Naive thymus-derived CD4-positive, alpha-beta T cell (primary cell): ENCODE measurements at regions of chr3 and their contacts with region 1.

Region 1: DNA sequence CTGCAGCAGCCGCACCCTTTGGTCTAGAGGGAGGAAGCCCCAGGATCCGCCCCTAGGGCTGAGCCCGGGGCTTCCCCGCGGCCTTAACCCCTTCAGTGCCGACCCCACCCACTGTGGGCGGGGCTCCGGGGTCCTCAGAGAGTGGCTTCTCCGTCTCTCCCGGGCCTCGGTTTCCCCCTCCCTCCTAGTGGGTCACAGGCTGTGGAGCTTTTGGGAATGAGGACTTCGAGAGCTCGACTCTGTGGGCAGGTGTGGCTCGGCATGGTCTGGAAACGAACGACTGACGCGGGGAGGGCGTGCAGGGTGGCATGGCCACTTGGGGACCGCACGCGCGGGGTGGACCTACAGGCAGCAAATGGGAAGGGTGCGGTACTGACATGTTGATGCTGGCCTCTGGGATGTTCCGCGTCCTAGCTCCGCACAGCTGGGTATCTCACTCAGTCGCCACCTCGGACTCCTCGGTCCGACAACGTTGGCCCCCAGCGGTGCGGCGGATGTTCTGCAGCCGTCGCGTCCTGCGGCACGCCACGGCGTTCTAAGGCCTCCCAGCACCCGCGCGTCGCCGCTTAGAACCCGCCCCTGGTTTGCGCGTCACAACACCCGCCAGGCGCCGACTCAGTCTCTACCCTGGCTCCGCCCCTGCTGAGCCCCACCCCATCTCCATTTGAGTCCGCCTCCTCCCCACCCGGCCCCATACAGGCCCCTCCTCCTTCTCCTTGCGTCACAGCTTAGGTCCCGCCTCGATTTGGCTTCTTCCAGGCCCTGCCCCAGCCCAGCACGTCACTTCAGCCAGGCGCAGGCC is at the starts of genes HYAL3 and NAA80:
- DNase-seq: peak; percentile 94 to 100 (median 99)
- ATAC-seq: peak; percentile 93
- H3K4me3 ChIP-seq: peak within 1 kb of the TSS; percentile 97
- H3K4me3 Mint-ChIP-seq: peak within 1 kb of the TSS; percentile 84 to 99 (median 97)
- H3K27ac ChIP-seq: peak within 1 kb of the TSS; percentile 86
- H3K27ac Mint-ChIP-seq: peak within 1 kb of the TSS; percentile 90 to 100 (median 99)
- H3K4me1 ChIP-seq: peaks cover 19 to 20% of the 10 kb centered on the region in 2 donors
- H3K4me1 Mint-ChIP-seq: peaks cover 12 to 36% (median 22%) of the 10 kb centered on the region in 7 donors
- H3K27me3 ChIP-seq: no peaks in the 10 kb centered on the region
- H3K27me3 Mint-ChIP-seq: no peaks in the 10 kb centered on the region
- total RNA-seq, gene HYAL3: 3.4 to 10.7 (median 4.2) TPM
- total RNA-seq, gene NAA80: 30.2 to 44.9 (median 33.6) TPM

Region 2: DNA sequence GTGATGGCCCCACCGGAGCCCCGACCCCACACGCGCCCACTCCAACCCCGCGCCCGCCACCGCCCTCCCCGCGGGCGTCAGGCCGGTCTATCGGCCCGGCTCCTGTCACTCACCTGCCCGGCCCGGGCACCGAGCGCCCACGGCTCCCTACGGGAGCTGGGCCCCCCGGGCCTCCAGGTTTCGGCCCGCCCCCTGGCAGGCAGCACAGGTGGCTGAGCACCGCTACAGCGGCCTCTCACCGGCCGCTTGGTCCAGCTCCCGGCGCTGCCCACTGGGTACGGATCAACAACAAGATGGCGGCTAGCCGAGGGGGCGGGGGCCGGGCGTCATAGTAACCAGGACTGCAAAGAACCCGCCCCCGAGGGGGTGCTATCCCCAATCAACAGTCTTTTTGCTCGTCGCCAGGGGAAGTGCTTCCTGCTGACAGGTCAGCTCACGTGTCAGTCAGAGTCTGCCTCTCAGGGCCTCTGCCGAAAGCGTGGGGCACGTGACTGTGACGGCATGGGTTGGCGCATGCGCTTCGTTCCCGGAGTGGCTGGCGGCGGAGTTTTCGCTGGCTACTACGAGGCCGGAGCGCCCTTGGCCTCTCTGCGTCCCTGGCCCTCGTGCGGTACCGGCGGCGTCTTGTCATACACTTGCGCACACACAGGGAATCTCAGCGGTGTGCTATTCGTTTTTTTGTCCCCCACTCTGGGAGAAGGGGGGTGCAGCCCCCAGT is 512.6 kb before region 1 on chr3 and contains the start of gene IP6K1:
- CTCF ChIA-PET with region 1: no interaction called
- POLR2A ChIA-PET with region 1: interaction called, 3 read pairs
- intact Hi-C with region 1: loop called in 1 of 2 experiments (anchors 1 kb)
- DNase-seq: peak; percentile 90 to 100 (median 99)
- ATAC-seq: peak; percentile 99
- H3K4me3 ChIP-seq: peak within 1 kb of the TSS; percentile 80
- H3K4me3 Mint-ChIP-seq: peak within 1 kb of the TSS; percentile 91 to 99 (median 94)
- H3K27ac ChIP-seq: peak within 1 kb of the TSS; percentile 95
- H3K27ac Mint-ChIP-seq: peak within 1 kb of the TSS; percentile 96 to 100 (median 99)
- H3K4me1 ChIP-seq: peaks cover 9 to 12% of the 10 kb centered on the region in 2 donors
- H3K4me1 Mint-ChIP-seq: peaks cover 15 to 50% (median 32%) of the 10 kb centered on the region in 7 donors
- H3K27me3 ChIP-seq: no peaks in the 10 kb centered on the region
- H3K27me3 Mint-ChIP-seq: peaks cover 0 to 6% (median 0%) of the 10 kb centered on the region in 5 donors
- total RNA-seq, gene IP6K1: 41.8 to 57.0 (median 47.3) TPM

Region 3: DNA sequence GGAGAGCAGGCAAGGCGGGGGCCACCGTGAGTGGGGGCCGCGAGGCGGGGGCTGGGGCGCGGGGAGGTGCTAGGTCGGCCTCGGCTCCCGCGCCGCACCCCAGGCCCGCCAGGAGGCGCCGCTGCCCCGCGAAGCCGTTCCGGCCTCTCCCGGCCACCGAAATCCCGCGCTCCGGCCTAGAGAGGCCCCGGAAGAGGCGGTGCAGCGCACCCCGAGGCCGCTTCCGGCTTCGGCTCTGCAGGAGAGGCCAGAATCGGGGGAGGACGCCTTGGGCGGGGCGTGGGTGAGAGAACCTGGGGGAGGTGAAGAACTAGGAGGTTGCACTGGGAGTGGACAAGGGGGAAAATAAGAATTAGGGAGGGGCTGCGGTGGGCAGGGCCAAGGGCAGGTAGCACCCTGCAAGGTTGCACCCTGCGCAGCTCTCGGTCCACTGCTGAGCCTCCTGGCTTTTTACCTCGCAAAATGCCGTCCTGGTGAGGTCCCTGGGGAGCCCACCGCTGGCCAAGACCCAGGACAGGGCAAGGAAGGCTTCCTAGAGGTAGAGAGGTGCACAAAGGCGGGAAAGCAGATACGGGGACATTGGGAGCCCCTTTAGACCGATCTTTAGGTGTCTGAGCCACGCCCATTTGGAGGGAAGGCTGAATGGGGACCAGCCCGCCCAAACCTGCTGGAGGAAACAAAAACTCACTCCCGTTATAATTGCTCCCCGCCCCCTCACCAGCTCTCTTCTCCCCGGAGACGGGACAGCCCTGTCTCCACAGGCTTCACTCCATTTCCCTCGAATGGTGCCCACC is 71.5 kb before region 1 on chr3:
- CTCF ChIA-PET with region 1: interaction called, 3 read pairs
- POLR2A ChIA-PET with region 1: interaction called, 5 read pairs
- intact Hi-C with region 1: loop called in 1 of 2 experiments (anchors 2 kb)
- DNase-seq: peak; percentile 86 to 96 (median 91)
- ATAC-seq: peak; percentile 91
- H3K4me3 ChIP-seq: peak overlapping the region; percentile 88
- H3K4me3 Mint-ChIP-seq: peak overlapping the region; percentile 89 to 98 (median 96)
- H3K27ac ChIP-seq: peak overlapping the region; percentile 77
- H3K27ac Mint-ChIP-seq: peak overlapping the region; percentile 86 to 97 (median 93)
- H3K4me1 ChIP-seq: peaks cover 9 to 12% of the 10 kb centered on the region in 2 donors
- H3K4me1 Mint-ChIP-seq: peaks cover 16 to 36% (median 34%) of the 10 kb centered on the region in 7 donors
- H3K27me3 ChIP-seq: no peaks in the 10 kb centered on the region
- H3K27me3 Mint-ChIP-seq: peaks cover 0 to 17% (median 0%) of the 10 kb centered on the region in 5 donors

Region 4: GRCh38 chr3:50321336-50322114 is 22.5 kb after region 1 on chr3:
- CTCF ChIA-PET with region 1: interaction called, 5 read pairs
- POLR2A ChIA-PET with region 1: interaction called, 31 read pairs
- intact Hi-C with region 1: loop called (anchors 1 kb)
- DNase-seq: peak; percentile 67 to 90 (median 83)
- ATAC-seq: peak; percentile 83
- H3K4me3 ChIP-seq: peak overlapping the region; percentile 97
- H3K4me3 Mint-ChIP-seq: peak overlapping the region; percentile 74 to 90 (median 82)
- H3K27ac ChIP-seq: peak overlapping the region; percentile 95
- H3K27ac Mint-ChIP-seq: peak overlapping the region; percentile 40 to 96 (median 93)
- H3K4me1 ChIP-seq: peaks cover 12 to 21% of the 10 kb centered on the region in 2 donors
- H3K4me1 Mint-ChIP-seq: peaks cover 21 to 45% (median 36%) of the 10 kb centered on the region in 7 donors
- H3K27me3 ChIP-seq: no peaks in the 10 kb centered on the region
- H3K27me3 Mint-ChIP-seq: no peaks in the 10 kb centered on the region

Region 5: DNA sequence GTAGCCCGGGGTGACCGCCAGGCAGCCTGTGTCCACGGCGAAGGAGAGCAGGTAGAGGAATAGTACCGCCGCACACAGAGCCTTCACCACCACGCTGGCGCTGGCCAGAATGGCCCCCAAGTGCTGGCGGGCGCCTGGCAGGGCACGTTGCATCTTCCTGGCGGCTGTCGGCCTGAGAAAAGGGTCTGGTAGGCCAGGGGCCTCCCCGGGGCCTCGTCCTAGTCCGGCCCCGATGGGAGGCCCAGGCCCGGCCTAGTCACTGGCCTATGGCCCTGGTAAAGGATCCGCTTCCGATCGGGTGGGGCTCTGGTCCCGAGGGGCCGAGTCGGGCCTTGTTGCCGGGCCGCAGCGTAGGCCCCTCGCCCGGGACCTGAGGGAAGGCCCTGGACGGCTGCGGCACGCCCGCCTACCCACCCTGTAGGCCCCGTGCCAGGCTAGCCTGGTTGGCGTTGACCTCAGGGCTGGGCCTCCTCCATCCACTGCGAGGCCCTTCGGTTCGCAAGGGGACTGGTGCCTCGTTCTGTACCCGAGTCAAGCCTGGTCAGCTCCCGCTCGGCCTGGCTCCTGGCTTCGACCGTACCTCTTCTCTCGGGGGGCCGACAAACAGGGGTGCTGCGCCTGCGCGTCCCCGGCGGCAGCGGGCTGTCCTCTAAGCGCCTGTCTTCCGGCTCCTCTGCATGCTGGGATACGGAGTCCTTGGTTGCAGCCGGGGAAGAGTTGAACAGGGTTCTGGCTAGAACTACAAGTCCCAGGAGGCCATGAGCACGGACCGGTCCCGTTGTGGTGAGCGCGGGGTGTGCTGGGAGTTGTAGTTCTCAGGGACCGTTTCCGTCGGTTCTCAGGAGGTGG is 60.1 kb after region 1 on chr3 and contains the start of gene TMEM115:
- CTCF ChIA-PET with region 1: no interaction called
- POLR2A ChIA-PET with region 1: interaction called, 3 read pairs
- intact Hi-C with region 1: loop called in 1 of 2 experiments (anchors 1 kb)
- DNase-seq: peak; percentile 71 to 99 (median 95)
- ATAC-seq: peak; percentile 100
- H3K4me3 ChIP-seq: peak within 1 kb of the TSS; percentile 88
- H3K4me3 Mint-ChIP-seq: peak within 1 kb of the TSS; percentile 91 to 99 (median 98)
- H3K27ac ChIP-seq: peak within 1 kb of the TSS; percentile 93
- H3K27ac Mint-ChIP-seq: peak within 1 kb of the TSS; percentile 73 to 98 (median 96)
- H3K4me1 ChIP-seq: peaks cover 30% of the 10 kb centered on the region in 2 donors
- H3K4me1 Mint-ChIP-seq: peaks cover 32 to 54% (median 43%) of the 10 kb centered on the region in 7 donors
- H3K27me3 ChIP-seq: no peaks in the 10 kb centered on the region
- H3K27me3 Mint-ChIP-seq: no peaks in the 10 kb centered on the region
- total RNA-seq, gene TMEM115: 17.7 to 32.4 (median 19.9) TPM